ENCODE measurements at regions of chr1 and their contacts with region 1.

Region 1: DNA sequence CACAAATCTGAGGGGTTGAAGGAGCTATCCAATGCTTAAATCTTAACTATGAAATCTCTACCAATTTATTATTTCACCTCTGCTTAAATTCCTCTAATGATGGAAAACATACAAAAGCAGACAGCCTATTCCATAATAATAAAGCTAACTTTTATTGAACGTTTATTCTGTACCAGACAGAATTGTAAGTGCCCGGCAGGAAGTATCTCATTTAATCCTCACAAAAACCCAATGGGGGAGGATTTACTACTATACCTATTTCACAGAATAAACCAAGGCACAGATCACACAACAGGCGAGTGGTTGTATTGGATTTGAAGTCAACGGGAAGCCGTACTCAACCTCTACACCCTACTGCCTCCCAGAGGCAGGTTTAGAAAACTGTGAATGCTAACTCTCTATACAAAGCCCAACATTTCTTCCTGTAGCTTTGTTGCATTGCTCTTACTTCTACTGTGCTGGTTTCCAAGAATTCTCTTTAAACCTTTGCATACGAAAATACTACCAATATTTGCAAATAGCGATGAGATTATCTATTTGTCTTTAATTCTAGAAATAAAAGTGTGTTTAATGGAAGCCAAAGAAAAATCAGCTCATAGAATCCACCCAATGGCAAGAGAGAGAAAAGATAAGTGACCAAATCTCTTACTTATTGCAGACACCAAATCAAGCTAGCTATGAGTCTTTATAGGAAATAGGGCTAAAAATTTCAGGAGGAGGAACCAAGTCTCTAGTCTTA is 33.5 kb upstream of the C1orf53 start:
- DNase-seq: peak; percentile 70
- ATAC-seq: peak; percentile 99
- H3K4me3 ChIP-seq: no peak overlapping the region
- H3K27ac ChIP-seq: no peak overlapping the region
- H3K4me1 ChIP-seq: no peaks in the 10 kb centered on the region
- H3K27me3 ChIP-seq: no peaks in the 10 kb centered on the region
- CTCF ChIP-seq: peak; percentile 80
- POLR2A ChIP-seq: no peak
- RAD21 ChIP-seq: peak; percentile 93

Region 2: DNA sequence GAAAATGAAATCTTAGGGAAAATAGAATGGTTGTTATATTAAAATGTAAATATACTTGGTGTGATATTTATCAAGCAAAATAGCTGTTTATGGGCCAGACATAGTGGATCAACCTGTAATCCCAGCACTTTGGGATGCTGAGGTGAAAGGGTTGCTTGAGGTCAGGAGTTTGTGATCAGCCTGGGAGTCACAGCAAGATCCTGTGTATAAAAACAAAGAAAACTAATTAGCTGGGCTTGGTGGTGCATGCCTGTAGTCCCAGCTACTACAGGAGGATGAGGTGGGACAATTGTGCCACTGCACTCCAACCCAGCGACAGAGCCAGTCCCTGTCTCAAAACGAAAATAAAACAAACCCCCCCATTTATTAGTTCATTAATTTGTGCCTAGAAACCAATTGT is 1071.0 kb before region 1 on chr1:
- CTCF ChIA-PET with region 1: no interaction called
- POLR2A ChIA-PET with region 1: no interaction called
- dilution Hi-C with region 1: no loop called
- in situ Hi-C with region 1: no loop called
- intact Hi-C with region 1: no loop called
- DNase-seq: no peak
- ATAC-seq: no peak
- H3K4me3 ChIP-seq: no peak overlapping the region
- H3K27ac ChIP-seq: no peak overlapping the region
- H3K4me1 ChIP-seq: no peaks in the 10 kb centered on the region
- H3K27me3 ChIP-seq: no peaks in the 10 kb centered on the region
- CTCF ChIP-seq: no peak
- POLR2A ChIP-seq: no peak
- RAD21 ChIP-seq: no peak

Region 3: DNA sequence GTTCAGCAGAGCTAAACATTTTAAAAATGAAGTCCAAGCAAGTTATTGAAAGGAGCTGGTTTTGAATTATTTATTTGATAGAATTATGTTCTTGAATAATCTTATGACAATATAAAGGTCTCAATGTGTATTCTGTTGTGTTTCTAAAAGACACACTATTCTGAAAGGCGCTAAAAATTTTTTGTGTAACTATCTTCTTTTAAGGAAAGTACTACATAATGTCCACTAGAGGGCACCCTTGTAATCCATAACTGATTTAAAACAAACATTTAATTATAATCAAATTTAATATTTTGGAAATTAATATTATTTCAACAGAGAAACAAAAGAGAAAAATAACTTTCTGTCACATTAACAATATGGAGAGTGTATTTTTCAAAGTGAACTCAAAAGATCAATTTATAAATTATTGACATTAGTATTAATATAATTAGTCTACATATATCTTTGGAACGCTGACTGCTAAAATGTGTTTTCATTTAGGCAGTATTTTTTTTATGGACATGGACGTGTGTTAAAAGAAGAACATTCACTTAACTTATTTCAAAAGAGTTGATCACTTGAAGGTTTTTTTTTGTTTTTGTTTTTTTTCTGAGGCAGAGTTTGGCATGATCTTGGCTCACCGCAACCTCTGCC is 342.1 kb before region 1 on chr1:
- CTCF ChIA-PET with region 1: interaction called, 3 read pairs
- POLR2A ChIA-PET with region 1: no interaction called
- dilution Hi-C with region 1: no loop called
- in situ Hi-C with region 1: no loop called
- intact Hi-C with region 1: loop called (anchors 5 kb)
- DNase-seq: peak; percentile 44
- ATAC-seq: no peak
- H3K4me3 ChIP-seq: no peak overlapping the region
- H3K27ac ChIP-seq: no peak overlapping the region
- H3K4me1 ChIP-seq: no peaks in the 10 kb centered on the region
- H3K27me3 ChIP-seq: no peaks in the 10 kb centered on the region
- CTCF ChIP-seq: peak; percentile 55
- POLR2A ChIP-seq: no peak
- RAD21 ChIP-seq: peak; percentile 45

Region 4: DNA sequence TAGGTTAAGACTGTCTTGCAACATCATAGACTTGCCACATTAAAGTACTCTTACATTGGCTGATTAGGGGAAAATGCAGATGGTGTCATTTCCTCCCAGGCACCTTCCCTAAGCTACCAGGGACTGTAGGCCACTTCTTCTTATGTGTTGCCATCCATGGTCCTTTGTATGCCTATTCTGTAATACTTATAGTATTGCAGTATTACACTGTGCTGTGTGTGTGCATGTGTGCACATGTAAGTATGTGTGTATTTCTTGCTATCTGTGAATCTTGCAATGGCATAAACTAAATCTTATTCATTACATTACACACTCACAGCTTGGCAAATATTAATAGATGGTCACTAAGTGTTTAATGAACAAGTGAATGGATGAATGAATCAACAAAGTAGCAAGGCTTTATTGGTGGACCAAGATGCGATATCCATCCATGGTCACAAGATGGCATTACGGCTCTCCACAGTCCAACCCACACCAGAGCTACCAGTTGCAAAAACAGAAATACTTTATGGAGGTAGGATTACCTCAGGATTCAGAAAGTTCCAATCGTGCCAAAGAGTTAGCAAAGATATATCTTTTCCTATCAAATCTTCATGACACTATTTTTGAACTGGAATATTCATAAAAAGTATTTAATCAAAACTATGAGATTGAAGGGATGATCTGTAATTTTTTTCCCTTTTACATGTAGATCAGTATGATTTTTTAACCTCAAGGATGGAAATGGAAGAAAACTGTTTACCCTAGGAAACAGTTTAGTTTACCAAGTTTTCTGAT is 253.8 kb before region 1 on chr1:
- CTCF ChIA-PET with region 1: interaction called, 13 read pairs
- POLR2A ChIA-PET with region 1: no interaction called
- dilution Hi-C with region 1: no loop called
- in situ Hi-C with region 1: loop called (anchors 10 kb)
- intact Hi-C with region 1: loop called (anchors 1 kb)
- DNase-seq: peak; percentile 51
- ATAC-seq: peak; percentile 91
- H3K4me3 ChIP-seq: no peak overlapping the region
- H3K27ac ChIP-seq: no peak overlapping the region
- H3K4me1 ChIP-seq: 0 out of 2 replicates have a peak, but pooled peaks cover 2% of the 10 kb centered on the region
- H3K27me3 ChIP-seq: no peaks in the 10 kb centered on the region
- CTCF ChIP-seq: peak; percentile 66
- POLR2A ChIP-seq: no peak
- RAD21 ChIP-seq: peak; percentile 78

Region 5: GRCh38 chr1:197692965-197693364 is 176.0 kb before region 1 on chr1:
- CTCF ChIA-PET with region 1: interaction called, 10 read pairs
- POLR2A ChIA-PET with region 1: no interaction called
- dilution Hi-C with region 1: no loop called
- in situ Hi-C with region 1: no loop called
- intact Hi-C with region 1: loop called (anchors 1 kb)
- DNase-seq: peak; percentile 31
- ATAC-seq: peak; percentile 59; the same call in 1 of the 2 replicates
- H3K4me3 ChIP-seq: no peak overlapping the region
- H3K27ac ChIP-seq: no peak overlapping the region
- H3K4me1 ChIP-seq: no peaks in the 10 kb centered on the region; the same call in 1 of the 2 replicates
- H3K27me3 ChIP-seq: no peaks in the 10 kb centered on the region
- CTCF ChIP-seq: peak; percentile 46
- POLR2A ChIP-seq: no peak
- RAD21 ChIP-seq: peak; percentile 57

Region 6: DNA sequence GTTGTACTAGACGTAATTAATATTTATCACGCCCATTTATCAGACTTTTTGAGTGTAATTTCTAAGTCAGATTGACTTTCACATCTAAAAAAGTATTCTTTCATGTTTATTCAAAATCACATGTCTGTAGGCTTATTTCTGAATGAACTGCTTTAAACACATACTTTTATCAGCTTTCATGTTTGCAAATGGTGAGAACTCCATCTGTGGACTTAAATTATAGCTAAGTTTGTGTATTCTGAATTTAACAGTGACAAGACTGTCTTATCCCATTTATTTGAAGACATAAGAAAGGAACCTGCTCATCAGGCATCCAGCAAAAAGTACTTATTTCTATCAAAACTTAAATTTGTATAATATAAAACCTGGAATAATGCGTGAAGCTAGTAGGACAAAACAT is 163.0 kb before region 1 on chr1:
- CTCF ChIA-PET with region 1: interaction called, 14 read pairs
- POLR2A ChIA-PET with region 1: no interaction called
- dilution Hi-C with region 1: no loop called
- in situ Hi-C with region 1: no loop called
- intact Hi-C with region 1: no loop called
- DNase-seq: no peak
- ATAC-seq: no peak
- H3K4me3 ChIP-seq: no peak overlapping the region
- H3K27ac ChIP-seq: no peak overlapping the region
- H3K4me1 ChIP-seq: no peaks in the 10 kb centered on the region
- H3K27me3 ChIP-seq: no peaks in the 10 kb centered on the region
- CTCF ChIP-seq: no peak
- POLR2A ChIP-seq: no peak
- RAD21 ChIP-seq: no peak

Region 7: DNA sequence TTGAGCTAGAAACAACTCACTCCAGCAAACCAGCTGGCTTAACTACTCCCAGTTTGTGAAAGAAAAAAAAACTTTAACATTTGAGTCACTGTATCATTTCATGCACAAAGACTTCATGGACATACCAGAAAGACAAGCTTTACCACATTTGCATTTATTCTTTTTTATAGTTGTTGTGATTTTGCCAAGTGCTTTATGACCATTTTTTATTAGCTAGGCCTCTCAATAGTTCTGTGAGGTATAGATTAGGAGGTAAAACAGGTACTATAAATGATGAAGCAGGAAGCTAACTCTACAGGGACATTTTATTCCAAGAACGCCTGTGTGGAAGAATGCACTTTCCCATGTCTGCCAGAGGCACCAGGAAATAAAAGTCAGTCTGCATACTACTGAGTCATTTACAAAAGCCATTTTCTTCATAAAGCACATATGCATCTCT is 85.4 kb before region 1 on chr1:
- CTCF ChIA-PET with region 1: interaction called, 4 read pairs
- POLR2A ChIA-PET with region 1: no interaction called
- dilution Hi-C with region 1: no loop called
- in situ Hi-C with region 1: no loop called
- intact Hi-C with region 1: loop called (anchors 2 kb)
- DNase-seq: peak; percentile 78
- ATAC-seq: peak; percentile 40
- H3K4me3 ChIP-seq: no peak overlapping the region
- H3K27ac ChIP-seq: peak overlapping the region; percentile 63; the same call in 1 of the 2 replicates
- H3K4me1 ChIP-seq: peaks cover 19% of the 10 kb centered on the region
- H3K27me3 ChIP-seq: no peaks in the 10 kb centered on the region
- CTCF ChIP-seq: no peak
- POLR2A ChIP-seq: no peak
- RAD21 ChIP-seq: no peak

Region 8: DNA sequence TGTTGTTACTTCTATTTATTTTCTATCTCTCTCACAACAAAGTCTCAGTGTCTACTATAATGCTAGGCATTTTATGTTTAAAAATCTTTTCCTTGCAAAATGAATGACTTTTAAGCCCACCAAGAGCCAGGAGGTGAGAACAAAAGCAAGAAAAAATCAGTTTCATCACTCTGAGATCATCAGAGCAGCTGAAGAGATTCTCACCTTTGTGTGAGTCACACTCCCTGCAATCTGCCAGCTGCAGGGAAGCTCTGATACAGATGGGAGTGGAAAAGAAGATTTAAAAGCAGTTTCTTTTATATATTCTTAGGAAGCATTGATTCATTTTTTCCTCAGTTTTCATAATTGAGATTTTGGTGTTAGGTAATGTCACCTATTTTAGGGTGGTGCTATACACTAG is 155.9 kb after region 1 on chr1:
- CTCF ChIA-PET with region 1: no interaction called
- POLR2A ChIA-PET with region 1: no interaction called
- dilution Hi-C with region 1: no loop called
- in situ Hi-C with region 1: no loop called
- intact Hi-C with region 1: no loop called
- DNase-seq: peak; percentile 71
- ATAC-seq: 0 out of 2 replicates have a peak, but pooled peaks have one; percentile 24
- H3K4me3 ChIP-seq: no peak overlapping the region
- H3K27ac ChIP-seq: no peak overlapping the region
- H3K4me1 ChIP-seq: no peaks in the 10 kb centered on the region
- H3K27me3 ChIP-seq: no peaks in the 10 kb centered on the region
- CTCF ChIP-seq: no peak
- POLR2A ChIP-seq: no peak
- RAD21 ChIP-seq: no peak

Measured in IMR-90 (cell line).